ENCODE measurements at regions of chr11 and their contacts with region 1.

Region 1: DNA sequence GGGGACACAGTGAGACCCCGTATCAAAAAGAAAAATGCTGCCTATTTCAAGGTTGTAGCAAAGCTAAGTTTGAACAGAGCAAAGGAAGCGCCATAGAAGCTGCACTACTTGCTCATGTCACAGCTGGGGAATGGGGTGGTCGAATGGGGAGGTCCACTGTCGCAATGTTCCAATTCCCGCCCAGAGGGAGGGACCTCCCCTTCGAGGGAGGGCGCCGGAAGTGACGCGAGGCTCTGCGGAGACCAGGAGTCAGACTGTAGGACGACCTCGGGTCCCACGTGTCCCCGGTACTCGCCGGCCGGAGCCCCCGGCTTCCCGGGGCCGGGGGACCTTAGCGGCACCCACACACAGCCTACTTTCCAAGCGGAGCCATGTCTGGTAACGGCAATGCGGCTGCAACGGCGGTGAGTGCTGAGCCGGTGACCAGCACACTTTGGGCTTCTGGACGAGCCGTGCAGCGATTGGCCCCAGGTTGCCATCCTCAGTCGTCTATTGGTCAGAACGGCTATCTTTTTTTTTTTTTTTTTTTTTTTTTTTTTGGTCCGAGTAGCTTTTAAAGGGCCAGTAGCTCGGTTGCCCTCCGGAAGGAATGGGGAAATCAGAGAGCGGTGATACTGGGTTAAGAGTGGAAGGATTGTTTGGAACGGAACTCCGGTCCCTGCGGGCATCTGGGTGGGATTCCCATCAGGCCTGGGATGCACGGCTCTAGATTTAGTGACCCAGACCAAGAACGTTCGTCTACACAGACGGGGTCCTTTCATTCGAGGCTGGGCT is at the start of gene HMBS:
- DNase-seq: peak; percentile 80
- ATAC-seq: peak; percentile 89
- H3K4me3 ChIP-seq: peak within 1 kb of the TSS; percentile 72 to 90
- H3K27ac ChIP-seq: peak within 1 kb of the TSS; percentile 89
- H3K4me1 ChIP-seq: peaks cover 25 to 37% of the 10 kb centered on the region in 2 experiments
- H3K27me3 ChIP-seq: no peaks in the 10 kb centered on the region
- CTCF ChIP-seq: no peak
- POLR2A ChIP-seq: peak; percentile 74
- RAD21 ChIP-seq: no peak
- total RNA-seq, gene HMBS: 69.0 TPM

Region 2: DNA sequence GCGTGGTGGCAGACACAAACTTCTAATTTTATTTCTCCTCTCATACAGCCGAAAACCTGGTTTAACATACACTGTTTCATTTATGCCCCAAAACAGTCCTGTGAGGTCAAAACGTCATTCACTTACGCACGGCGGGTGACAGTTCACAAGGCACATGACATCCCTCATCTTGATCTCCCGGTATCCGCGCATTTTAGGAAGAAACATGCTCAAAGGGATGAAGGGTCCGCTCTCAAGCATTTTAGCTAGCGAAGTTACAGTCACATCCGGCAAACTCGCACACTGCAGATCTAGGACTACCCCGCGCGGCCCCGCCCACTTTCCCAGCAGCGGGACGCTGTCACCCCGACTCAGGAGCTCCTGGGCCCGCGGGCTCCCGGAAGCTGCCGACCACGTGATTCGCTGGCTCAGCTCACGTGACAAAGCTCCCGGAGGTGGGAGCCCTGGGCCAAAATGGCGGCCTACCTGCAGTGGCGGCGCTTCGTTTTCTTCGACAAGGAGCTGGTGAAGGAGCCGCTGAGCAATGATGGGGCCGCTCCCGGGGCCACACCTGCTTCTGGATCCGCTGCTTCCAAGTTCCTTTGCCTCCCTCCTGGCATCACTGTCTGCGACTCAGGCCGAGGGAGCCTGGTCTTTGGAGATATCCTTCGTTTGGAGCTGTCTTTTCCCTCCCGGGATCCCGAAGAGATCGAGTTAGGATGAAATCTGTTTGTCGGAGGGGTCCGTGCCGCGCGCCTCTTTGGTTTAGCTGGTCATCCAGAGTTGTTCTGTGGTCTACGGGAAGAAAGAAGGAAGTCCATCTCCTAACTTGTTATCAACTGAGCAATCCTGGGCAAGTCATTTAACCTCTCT is 17.3 kb before region 1 on chr11 and contains the start of gene VPS11:
- CTCF ChIA-PET with region 1: interaction called, 6 read pairs
- POLR2A ChIA-PET with region 1: interaction called, 8 read pairs
- RAD21 ChIA-PET with region 1: interaction called in 1 of 2 experiments, 3 read pairs
- intact Hi-C with region 1: loop called (anchors 1 kb)
- DNase-seq: peak; percentile 86
- ATAC-seq: peak; percentile 93
- H3K4me3 ChIP-seq: peak within 1 kb of the TSS; percentile 88 to 97
- H3K27ac ChIP-seq: peak within 1 kb of the TSS; percentile 65
- H3K4me1 ChIP-seq: peaks cover 5 to 16% of the 10 kb centered on the region in 2 experiments
- H3K27me3 ChIP-seq: no peaks in the 10 kb centered on the region
- CTCF ChIP-seq: no peak
- POLR2A ChIP-seq: peak; percentile 35
- RAD21 ChIP-seq: no peak
- total RNA-seq, gene VPS11: 20.4 TPM

Region 3: GRCh38 chr11:119095066-119095880 is 10.4 kb after region 1 on chr11:
- CTCF ChIA-PET with region 1: interaction called, 20 read pairs
- POLR2A ChIA-PET with region 1: interaction called, 27 read pairs
- RAD21 ChIA-PET with region 1: interaction called in 1 of 2 experiments, 6 read pairs
- intact Hi-C with region 1: no loop called
- DNase-seq: peak; percentile 99
- ATAC-seq: peak; percentile 82
- H3K4me3 ChIP-seq: peak overlapping the region; percentile 83 to 97
- H3K27ac ChIP-seq: peak overlapping the region; percentile 93
- H3K4me1 ChIP-seq: peaks cover 18 to 29% of the 10 kb centered on the region in 2 experiments
- H3K27me3 ChIP-seq: no peaks in the 10 kb centered on the region
- CTCF ChIP-seq: peak in 1 of 3 experiments; percentile 6; a peak in 2 of 6 replicates
- POLR2A ChIP-seq: peak; percentile 100
- RAD21 ChIP-seq: no peak